ENCODE measurements at regions of chr2 and their contacts with region 1.

Region 1: DNA sequence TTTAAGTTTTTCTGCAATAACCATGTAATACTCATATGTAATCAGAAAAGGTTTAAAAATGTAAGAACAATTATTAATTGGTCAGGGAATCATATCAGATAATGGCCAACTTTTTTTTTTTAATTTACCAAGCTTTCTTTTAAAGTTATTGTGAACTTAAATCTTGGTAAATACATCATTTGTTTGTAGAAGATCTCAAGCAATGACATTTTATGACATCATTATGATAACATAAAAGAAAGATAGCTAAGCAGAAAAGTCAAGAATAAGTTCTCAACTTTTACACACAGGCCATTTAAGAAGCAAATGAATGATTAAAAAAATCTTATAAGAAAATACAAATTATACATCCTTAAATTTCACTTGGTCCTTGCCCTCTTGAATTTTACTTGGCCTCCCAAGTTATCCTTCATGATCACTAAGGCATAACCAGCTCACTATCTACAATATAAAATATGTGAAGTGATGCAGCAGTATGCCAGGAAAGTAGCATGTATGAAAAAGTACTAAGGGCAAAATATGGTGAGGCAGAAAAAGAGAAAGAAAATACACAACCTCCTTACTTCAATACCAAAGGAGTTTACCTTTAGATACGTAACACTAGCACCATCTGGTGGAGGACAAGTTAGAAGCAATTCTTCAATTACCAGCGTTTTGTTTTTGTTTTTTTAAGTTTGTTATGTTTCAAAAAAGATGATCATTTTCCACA is 116.6 kb downstream of the SRBD1 start:
- DNase-seq: peak; percentile 7
- ATAC-seq: no peak
- H3K4me3 Mint-ChIP-seq: no peak overlapping the region
- H3K27ac Mint-ChIP-seq: no peak overlapping the region
- H3K4me1 Mint-ChIP-seq: peaks cover 30% of the 10 kb centered on the region
- H3K27me3 Mint-ChIP-seq: no peaks in the 10 kb centered on the region
- CTCF ChIP-seq: peak; percentile 76

Region 2: DNA sequence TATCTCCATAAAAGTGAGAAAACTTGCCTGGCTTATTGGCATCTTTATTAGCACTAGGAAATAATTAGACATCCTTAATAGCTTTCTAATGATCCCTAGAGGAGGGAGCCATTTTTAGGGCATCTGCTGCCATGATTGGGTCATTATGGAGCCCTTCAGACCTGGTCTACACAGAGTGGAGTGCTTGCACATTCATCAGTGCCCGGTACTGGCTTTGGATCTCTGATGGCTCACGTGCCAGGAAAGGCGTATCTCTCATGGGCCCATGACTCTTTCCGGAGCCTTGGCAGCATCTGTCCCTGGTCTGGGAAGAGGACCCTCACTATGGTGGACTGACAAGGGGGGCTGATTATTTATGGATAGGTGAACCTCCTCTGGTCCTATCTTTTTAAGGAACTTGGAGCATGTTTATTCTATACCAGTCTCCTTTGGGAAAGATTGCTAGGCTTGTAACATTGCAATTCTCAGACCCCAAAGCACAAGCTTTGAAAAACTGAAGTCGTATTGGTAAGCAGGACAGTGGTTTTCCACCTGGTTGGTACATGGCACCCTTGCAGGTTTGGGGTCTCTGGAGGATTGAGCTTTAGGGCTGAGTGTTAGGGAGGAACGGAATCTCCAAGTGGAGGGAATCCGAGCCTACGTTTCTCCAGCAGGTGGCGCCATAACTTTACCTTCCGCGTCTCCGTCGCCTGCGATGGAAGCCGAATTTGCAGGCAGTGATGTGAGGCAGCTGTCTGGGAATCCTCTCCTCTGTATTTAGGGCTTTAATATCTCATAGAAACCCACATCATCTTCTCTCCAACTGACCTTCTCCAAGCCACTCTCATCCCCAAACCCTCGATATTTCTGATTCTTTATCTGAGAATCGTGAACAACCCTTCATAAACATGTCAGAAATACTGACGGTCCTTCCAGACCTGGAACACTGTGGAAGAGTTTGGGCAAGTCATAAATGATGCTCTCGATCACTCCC is 513.0 kb before region 1 on chr2:
- CTCF ChIA-PET with region 1: interaction called, 72 read pairs
- POLR2A ChIA-PET with region 1: interaction called, 3 read pairs
- intact Hi-C with region 1: loop called (anchors 2 kb)
- DNase-seq: peak; percentile 78
- ATAC-seq: peak; percentile 51
- H3K4me3 Mint-ChIP-seq: no peak overlapping the region
- H3K27ac Mint-ChIP-seq: no peak overlapping the region
- H3K4me1 Mint-ChIP-seq: peaks cover 2% of the 10 kb centered on the region
- H3K27me3 Mint-ChIP-seq: peaks cover 11% of the 10 kb centered on the region
- CTCF ChIP-seq: peak; percentile 83

Region 3: DNA sequence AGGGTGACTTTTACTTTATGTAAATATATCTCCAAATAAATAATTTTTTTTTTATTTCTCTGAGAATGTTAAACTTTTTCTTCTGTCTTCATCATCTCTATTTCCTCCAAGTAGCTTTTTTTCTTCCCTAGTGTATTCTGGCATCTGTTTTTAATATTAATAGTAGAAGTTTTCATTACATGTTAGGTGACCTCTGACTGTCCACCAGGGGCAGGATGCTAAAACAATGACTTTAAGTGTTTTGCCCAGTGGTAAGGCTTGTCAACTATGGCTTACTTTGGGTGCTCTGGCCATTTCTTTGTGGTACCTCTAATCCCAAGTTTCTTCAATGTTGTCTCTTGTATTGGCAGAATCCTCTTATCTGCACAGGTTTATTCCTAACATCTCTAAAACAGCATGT is 10.4 kb before region 1 on chr2:
- CTCF ChIA-PET with region 1: interaction called, 19 read pairs
- POLR2A ChIA-PET with region 1: no interaction called
- intact Hi-C with region 1: no loop called
- DNase-seq: no peak
- ATAC-seq: no peak
- H3K4me3 Mint-ChIP-seq: no peak overlapping the region
- H3K27ac Mint-ChIP-seq: no peak overlapping the region
- H3K4me1 Mint-ChIP-seq: no peaks in the 10 kb centered on the region
- H3K27me3 Mint-ChIP-seq: no peaks in the 10 kb centered on the region
- CTCF ChIP-seq: peak; percentile 37

Region 4: DNA sequence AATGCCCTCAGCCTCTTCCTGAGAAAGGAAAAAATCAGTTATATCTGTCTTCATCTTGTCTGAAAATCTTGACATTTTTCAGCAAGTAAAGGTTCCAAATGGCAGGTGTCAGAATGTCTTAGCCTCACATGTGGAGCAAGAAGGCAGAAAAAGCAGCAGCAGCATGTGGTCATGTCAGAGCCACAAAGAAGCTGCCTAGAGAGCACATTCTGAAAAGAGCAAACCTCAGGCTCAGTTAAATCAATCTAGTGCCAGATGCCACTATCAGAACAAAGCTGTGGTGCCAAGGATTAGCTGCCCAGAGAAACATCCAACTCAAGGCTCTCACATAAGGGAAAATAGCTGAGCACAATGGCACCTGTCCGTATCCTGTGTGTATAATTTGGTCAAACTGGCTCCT is 10.7 kb after region 1 on chr2:
- CTCF ChIA-PET with region 1: interaction called, 13 read pairs
- POLR2A ChIA-PET with region 1: no interaction called
- intact Hi-C with region 1: no loop called
- DNase-seq: no peak
- ATAC-seq: no peak
- H3K4me3 Mint-ChIP-seq: no peak overlapping the region
- H3K27ac Mint-ChIP-seq: no peak overlapping the region
- H3K4me1 Mint-ChIP-seq: peaks cover 2% of the 10 kb centered on the region
- H3K27me3 Mint-ChIP-seq: no peaks in the 10 kb centered on the region
- CTCF ChIP-seq: no peak

Region 5: GRCh38 chr2:45567974-45568789 is 73.8 kb after region 1 on chr2:
- CTCF ChIA-PET with region 1: interaction called, 4 read pairs
- POLR2A ChIA-PET with region 1: no interaction called
- intact Hi-C with region 1: loop called (anchors 5 kb)
- DNase-seq: no peak
- ATAC-seq: peak; percentile 97
- H3K4me3 Mint-ChIP-seq: peak overlapping the region; percentile 69
- H3K27ac Mint-ChIP-seq: peak overlapping the region; percentile 99
- H3K4me1 Mint-ChIP-seq: peaks cover 20% of the 10 kb centered on the region
- H3K27me3 Mint-ChIP-seq: no peaks in the 10 kb centered on the region
- CTCF ChIP-seq: no peak

Region 6: DNA sequence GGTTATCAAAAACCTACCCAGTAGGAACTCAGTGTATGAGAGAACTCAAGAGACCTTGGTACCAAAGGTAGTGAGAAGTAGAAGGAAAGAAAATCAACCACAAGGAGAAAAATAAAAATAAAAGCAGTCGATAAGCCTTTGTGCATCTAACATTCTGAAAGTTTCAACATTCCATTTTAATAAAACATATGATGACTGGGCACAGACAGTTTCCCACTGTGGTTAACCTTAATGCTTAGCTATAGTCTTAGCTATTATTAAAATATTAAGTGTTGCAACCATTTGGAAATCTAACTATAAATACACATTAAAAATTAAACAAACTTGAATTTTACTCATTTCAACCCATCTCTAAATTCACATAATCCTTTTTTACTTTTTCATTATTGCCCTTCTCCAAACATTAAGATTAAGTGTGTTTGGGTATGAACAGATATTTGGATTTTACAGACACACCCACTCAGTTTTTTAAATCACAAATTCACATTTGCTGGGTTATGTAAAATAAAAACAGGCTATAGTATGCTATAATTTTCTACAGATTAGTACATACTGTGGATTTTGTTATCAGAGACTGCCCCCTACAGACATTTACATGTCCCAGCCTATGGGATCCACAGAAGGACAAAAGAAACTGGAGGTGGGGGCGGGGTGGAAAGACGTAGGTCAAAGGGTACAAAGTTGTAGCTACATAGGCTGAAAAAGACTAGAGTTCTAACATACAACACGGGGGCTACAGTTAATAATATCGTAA is 83.8 kb after region 1 on chr2:
- CTCF ChIA-PET with region 1: interaction called, 14 read pairs
- POLR2A ChIA-PET with region 1: interaction called, 3 read pairs
- intact Hi-C with region 1: no loop called
- DNase-seq: peak; percentile 46
- ATAC-seq: peak; percentile 62
- H3K4me3 Mint-ChIP-seq: no peak overlapping the region
- H3K27ac Mint-ChIP-seq: no peak overlapping the region
- H3K4me1 Mint-ChIP-seq: peaks cover 2% of the 10 kb centered on the region
- H3K27me3 Mint-ChIP-seq: no peaks in the 10 kb centered on the region
- CTCF ChIP-seq: peak; percentile 67

Region 7: DNA sequence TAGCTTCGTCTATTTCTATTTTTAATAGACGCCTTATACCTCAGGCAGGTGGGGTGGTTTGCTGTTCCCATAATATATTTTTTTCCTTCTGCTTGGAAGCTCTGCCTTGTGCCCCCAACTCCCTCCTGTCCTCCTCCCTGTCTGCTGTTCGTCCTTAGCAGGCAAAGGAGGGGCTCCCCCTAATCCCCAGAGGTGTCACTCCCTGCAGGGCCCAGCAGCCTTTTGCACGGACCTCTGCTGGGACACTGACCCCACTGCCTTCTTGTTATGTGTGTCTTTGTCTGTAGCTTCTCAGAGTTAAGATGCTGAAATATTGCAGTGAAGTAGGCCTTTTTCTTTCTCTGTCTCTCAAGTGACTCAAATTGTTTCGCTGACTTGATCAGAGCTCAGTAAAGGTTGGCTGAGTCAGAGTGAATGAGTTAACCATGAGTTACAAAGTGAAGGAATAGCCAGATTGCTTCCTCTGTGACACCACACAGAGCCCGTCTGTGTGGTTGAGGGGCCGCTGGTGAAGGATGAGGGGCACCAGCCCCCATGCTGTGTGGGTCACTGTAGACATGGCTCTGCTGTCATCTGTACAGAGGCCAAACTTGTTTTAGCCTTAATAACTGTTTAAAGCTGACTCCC is 204.7 kb after region 1 on chr2:
- CTCF ChIA-PET with region 1: no interaction called
- POLR2A ChIA-PET with region 1: no interaction called
- intact Hi-C with region 1: no loop called
- DNase-seq: peak; percentile 23
- ATAC-seq: peak; percentile 91
- H3K4me3 Mint-ChIP-seq: no peak overlapping the region
- H3K27ac Mint-ChIP-seq: no peak overlapping the region
- H3K4me1 Mint-ChIP-seq: peaks cover 10% of the 10 kb centered on the region
- H3K27me3 Mint-ChIP-seq: no peaks in the 10 kb centered on the region
- CTCF ChIP-seq: no peak

Region 8: GRCh38 chr2:46073540-46074018 is 579.2 kb after region 1 on chr2:
- CTCF ChIA-PET with region 1: no interaction called
- POLR2A ChIA-PET with region 1: no interaction called
- intact Hi-C with region 1: no loop called
- DNase-seq: no peak
- ATAC-seq: no peak
- H3K4me3 Mint-ChIP-seq: no peak overlapping the region
- H3K27ac Mint-ChIP-seq: no peak overlapping the region
- H3K4me1 Mint-ChIP-seq: peaks cover 4% of the 10 kb centered on the region
- H3K27me3 Mint-ChIP-seq: no peaks in the 10 kb centered on the region
- CTCF ChIP-seq: no peak